ENCODE measurements at regions of chr19 and their contacts with region 1.

Region 1: DNA sequence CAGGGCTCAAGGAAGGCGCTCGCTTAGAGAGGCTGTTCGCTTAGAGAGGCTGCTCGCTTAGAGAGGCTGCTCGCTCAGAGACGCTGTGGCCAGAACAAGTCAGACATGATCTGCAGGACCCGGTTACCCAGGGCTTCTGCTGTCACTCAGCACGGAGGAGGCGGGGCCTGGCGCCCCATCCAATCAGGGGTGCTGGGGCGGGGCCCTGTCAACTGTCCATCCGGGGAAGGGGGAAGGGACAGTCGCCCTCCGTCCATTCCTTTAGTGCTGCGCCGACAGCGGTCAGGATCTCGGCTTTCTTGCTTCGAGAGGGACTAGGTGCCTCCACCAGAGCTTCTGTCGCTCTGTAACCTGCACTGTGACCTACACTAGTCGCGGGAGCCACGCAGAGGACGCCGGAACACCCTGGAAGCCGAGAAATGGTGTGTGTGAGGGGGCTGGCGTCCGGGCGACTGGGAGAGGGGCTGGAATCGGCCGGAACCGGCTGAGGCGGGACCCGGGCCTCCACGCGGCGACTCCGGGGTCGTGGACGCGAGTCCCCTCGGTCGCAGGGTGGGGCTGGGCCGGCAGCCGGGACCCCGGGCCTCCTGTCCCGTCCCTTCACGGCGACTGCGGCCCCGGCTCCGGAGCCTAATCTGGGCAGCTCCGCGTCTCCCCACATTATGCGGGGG is at the start of gene ZNF440:
- DNase-seq: peak; percentile 92
- ATAC-seq: peak; percentile 98
- H3K4me3 Mint-ChIP-seq: peak within 1 kb of the TSS; percentile 87
- H3K27ac Mint-ChIP-seq: peak within 1 kb of the TSS; percentile 83
- H3K4me1 Mint-ChIP-seq: peaks cover 10% of the 10 kb centered on the region
- H3K27me3 Mint-ChIP-seq: no peaks in the 10 kb centered on the region
- total RNA-seq, gene ZNF440: 16.5 to 17.5 TPM

Region 2: GRCh38 chr19:11798391-11799330 is 15.5 kb before region 1 on chr19 and contains the start of gene ZNF491:
- POLR2A ChIA-PET with region 1: interaction called, 18 read pairs
- DNase-seq: peak; percentile 87
- ATAC-seq: peak; percentile 99
- H3K4me3 Mint-ChIP-seq: peak within 1 kb of the TSS; percentile 91
- H3K27ac Mint-ChIP-seq: peak within 1 kb of the TSS; percentile 84
- H3K4me1 Mint-ChIP-seq: peaks cover 9% of the 10 kb centered on the region
- H3K27me3 Mint-ChIP-seq: no peaks in the 10 kb centered on the region
- total RNA-seq, gene ZNF491: 3.1 to 3.6 TPM

Region 3: GRCh38 chr19:11848594-11849469 is 34.7 kb after region 1 on chr19 and contains the start of gene ZNF439:
- POLR2A ChIA-PET with region 1: interaction called, 13 read pairs
- DNase-seq: peak; percentile 91
- ATAC-seq: peak; percentile 99
- H3K4me3 Mint-ChIP-seq: peak within 1 kb of the TSS; percentile 90
- H3K27ac Mint-ChIP-seq: peak within 1 kb of the TSS; percentile 89
- H3K4me1 Mint-ChIP-seq: peaks cover 11% of the 10 kb centered on the region
- H3K27me3 Mint-ChIP-seq: no peaks in the 10 kb centered on the region
- total RNA-seq, gene ZNF439: 16.0 to 16.8 TPM

Measured in activated naive CD8-positive, alpha-beta T cell treated with anti-CD3 and anti-CD28 coated beads, Interleukin-2, amount 10 ng/mL, durations not matched to agents 7 days and 5 days (primary cell).